Psoas muscle (tissue), 8 donors: ENCODE measurements at regions of chr7 and their contacts with region 1.

Region 1: GRCh38 chr7:131188367-131189339 is 139.0 kb upstream of the MKLN1 start:
- DNase-seq: peak in 1 of 2 donors; percentile 56
- ATAC-seq: peak; percentile 12 to 79 (median 50)
- H3K4me3 ChIP-seq: no peak overlapping the region
- H3K27ac ChIP-seq: peak overlapping the region; percentile 86
- H3K4me1 ChIP-seq: peaks cover 41% of the 10 kb centered on the region
- H3K27me3 ChIP-seq: no peaks in the 10 kb centered on the region
- CTCF ChIP-seq: no peak

Region 2: DNA sequence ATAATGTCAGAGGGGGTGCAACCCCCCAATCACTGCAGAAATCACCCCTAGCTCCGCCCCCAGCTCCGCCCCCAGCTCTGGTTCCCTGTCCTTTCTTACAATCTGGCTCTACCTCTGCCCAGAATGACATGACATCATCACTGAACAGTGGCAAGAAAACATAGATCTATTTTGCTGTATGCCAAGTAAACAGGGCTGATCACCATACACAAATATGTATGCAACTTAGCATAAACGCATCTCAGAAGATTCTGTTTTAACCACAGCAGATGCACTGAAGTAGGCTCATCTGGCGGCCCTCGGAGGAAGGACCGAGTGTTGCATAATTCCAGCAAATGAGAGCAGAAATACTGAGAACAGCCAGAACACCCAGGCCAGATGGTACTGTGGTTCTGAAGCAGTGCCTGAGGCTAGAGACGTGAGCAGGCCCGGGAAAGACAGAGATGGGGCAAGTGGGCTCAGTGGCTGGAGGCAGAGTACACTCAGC is 161.3 kb before region 1 on chr7:
- intact Hi-C with region 1: no loop called
- DNase-seq: peak; percentile 62 to 69
- ATAC-seq: peak; percentile 20 to 62 (median 54)
- H3K4me3 ChIP-seq: peak overlapping the region; percentile 27
- H3K27ac ChIP-seq: peak overlapping the region; percentile 39
- H3K4me1 ChIP-seq: peaks cover 75% of the 10 kb centered on the region
- H3K27me3 ChIP-seq: no peaks in the 10 kb centered on the region
- CTCF ChIP-seq: no peak

Region 3: DNA sequence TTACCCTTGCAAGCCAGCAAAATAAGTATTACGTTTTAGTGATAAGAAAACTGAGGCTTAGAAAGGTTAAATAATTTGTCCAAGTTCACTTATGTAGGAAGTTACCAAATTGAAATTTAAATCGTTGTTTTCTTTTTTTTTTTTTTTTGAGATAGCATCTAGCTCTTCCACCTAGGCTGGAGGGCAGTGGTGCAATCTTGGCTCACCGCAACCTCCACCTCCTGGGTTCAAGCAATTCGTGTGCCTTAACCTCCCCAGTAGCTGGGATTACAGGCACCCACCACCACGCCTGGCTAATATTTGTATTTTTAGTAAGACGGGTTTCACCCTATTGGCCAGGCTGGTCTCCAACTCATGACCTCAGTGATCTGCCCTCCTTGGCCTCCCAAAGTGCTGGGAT is 19.9 kb before region 1 on chr7:
- intact Hi-C with region 1: loop called in 1 of 2 experiments (anchors 2 kb)
- DNase-seq: no peak
- ATAC-seq: no peak
- H3K4me3 ChIP-seq: no peak overlapping the region
- H3K27ac ChIP-seq: no peak overlapping the region
- H3K4me1 ChIP-seq: peaks cover 11% of the 10 kb centered on the region
- H3K27me3 ChIP-seq: no peaks in the 10 kb centered on the region
- CTCF ChIP-seq: no peak